ENCODE measurements at regions of chr6 and their contacts with region 1.

Region 1: GRCh38 chr6:6407071-6407741 is 86.7 kb upstream of the F13A1 start:
- DNase-seq: peak; percentile 92
- H3K4me3 ChIP-seq: peak overlapping the region; percentile 54
- H3K27ac ChIP-seq: peak overlapping the region; percentile 94
- H3K4me1 ChIP-seq: peaks cover 85% of the 10 kb centered on the region
- CTCF ChIP-seq: no peak

Region 2: GRCh38 chr6:5379647-5380242 is 1027.5 kb before region 1 on chr6:
- CTCF ChIA-PET with region 1: no interaction called
- POLR2A ChIA-PET with region 1: no interaction called
- intact Hi-C with region 1: no loop called
- DNase-seq: peak; percentile 46
- H3K4me3 ChIP-seq: no peak overlapping the region
- H3K27ac ChIP-seq: no peak overlapping the region
- H3K4me1 ChIP-seq: no peaks in the 10 kb centered on the region
- CTCF ChIP-seq: peak; percentile 80

Region 3: GRCh38 chr6:6390849-6391602 is 16.2 kb before region 1 on chr6:
- CTCF ChIA-PET with region 1: interaction called, 3 read pairs
- POLR2A ChIA-PET with region 1: interaction called, 42 read pairs
- intact Hi-C with region 1: loop called (anchors 1 kb)
- DNase-seq: peak; percentile 90
- H3K4me3 ChIP-seq: peak overlapping the region; percentile 61
- H3K27ac ChIP-seq: peak overlapping the region; percentile 92
- H3K4me1 ChIP-seq: peaks cover 100% of the 10 kb centered on the region
- CTCF ChIP-seq: no peak

Region 4: DNA sequence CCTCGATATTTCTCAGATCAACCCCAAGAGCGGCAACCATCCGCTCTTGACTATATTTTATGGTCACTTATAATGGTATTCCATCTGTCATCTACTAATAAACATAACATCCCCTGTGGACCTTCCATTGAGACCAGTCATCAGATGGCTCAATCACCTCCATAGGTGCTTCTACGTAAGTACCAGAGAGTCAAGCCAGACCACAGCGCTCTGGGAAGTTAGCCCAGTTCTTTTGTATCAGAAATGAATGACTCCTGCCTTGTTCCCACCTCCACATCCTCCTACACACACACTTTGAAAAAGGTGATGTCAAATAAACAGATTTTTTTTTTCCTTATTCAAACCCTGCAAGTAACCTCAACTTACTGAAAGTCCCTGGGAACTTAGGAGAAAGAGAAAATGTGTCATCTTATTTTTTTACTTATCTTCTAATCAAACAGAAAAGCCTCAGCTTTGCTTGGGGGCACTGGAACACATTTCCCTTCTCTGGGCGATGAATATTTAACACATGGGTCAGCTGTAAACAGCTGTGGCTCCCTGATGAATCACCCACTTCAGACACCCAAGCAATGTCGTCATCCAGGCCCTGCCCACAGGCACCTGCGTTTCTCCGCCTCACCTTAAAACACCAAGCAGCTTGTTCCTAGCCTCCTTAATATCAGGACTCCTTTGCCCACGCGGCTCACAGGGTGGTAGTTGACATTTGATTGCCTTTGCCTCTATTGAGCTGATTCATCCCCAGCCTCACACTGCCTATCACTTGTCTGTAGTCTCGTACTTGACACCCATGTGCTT is 60.0 kb after region 1 on chr6:
- CTCF ChIA-PET with region 1: no interaction called
- POLR2A ChIA-PET with region 1: no interaction called
- intact Hi-C with region 1: loop called (anchors 5 kb)
- DNase-seq: no peak
- H3K4me3 ChIP-seq: no peak overlapping the region
- H3K27ac ChIP-seq: no peak overlapping the region
- H3K4me1 ChIP-seq: peaks cover 13% of the 10 kb centered on the region
- CTCF ChIP-seq: no peak

Region 5: GRCh38 chr6:6486595-6486994 is 79.4 kb after region 1 on chr6:
- CTCF ChIA-PET with region 1: no interaction called
- POLR2A ChIA-PET with region 1: no interaction called
- intact Hi-C with region 1: no loop called
- DNase-seq: no peak
- H3K4me3 ChIP-seq: no peak overlapping the region
- H3K27ac ChIP-seq: no peak overlapping the region
- H3K4me1 ChIP-seq: no peaks in the 10 kb centered on the region
- CTCF ChIP-seq: no peak

Region 6: DNA sequence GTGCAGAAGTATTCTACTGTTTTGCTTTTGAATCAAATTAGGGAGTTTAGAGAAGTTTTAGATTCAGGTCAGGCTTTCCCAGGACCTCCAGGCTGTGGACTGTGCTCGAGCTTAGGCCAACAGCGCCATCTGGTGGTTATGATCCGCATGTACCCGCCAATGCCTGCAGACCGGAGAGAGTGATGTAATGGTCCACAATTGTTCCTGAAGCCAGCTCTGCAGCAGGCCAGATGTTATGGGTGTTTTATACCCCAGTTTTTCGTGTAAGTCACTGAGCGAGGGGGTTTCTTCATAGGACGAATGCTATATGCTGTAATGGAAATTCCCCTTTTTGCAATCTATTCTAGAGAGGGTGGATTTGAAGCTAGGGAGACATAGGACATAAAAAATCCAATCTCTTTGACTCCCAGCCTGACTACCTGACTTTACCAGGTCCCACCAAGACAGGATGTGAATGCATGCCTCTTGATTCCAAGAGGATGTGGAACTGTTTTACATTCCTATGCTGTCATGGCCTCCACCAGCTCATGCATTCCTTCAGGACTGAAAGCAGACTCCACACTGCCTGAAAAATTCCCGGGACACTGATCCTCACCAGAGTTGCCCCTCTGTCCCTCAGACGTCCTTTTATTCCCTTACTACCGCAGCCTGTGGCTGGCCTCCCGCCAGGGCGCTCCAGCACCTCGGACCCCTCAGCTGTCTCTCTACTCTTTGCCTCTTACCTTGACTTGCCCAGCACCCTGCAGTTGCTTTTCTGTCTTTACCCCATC is 140.1 kb after region 1 on chr6:
- CTCF ChIA-PET with region 1: no interaction called
- POLR2A ChIA-PET with region 1: no interaction called
- intact Hi-C with region 1: loop called (anchors 2 kb)
- DNase-seq: peak; percentile 87
- H3K4me3 ChIP-seq: peak overlapping the region; percentile 37
- H3K27ac ChIP-seq: no peak overlapping the region
- H3K4me1 ChIP-seq: peaks cover 20% of the 10 kb centered on the region
- CTCF ChIP-seq: peak; percentile 97

Measured in OCI-LY7 (cell line).